ENCODE measurements at regions of chr1 and their contacts with region 1.

Region 1: GRCh38 chr1:214660862-214661261 is 57.9 kb downstream of the CENPF start:
- DNase-seq: peak; percentile 26 to 58 (median 48)
- H3K4me3 ChIP-seq: no peak overlapping the region
- H3K27ac ChIP-seq: no peak overlapping the region
- H3K4me1 ChIP-seq: no peaks in the 10 kb centered on the region
- H3K27me3 ChIP-seq: no peaks in the 10 kb centered on the region
- CTCF ChIP-seq: peak in 1 of 3 donors; percentile 7
- EP300 ChIP-seq: no peak
- POLR2A ChIP-seq: no peak

Region 2: GRCh38 chr1:214808845-214809460 is 148.1 kb after region 1 on chr1:
- intact Hi-C with region 1: no loop called
- DNase-seq: no peak
- H3K4me3 ChIP-seq: no peak overlapping the region
- H3K27ac ChIP-seq: no peak overlapping the region
- H3K4me1 ChIP-seq: no peaks in the 10 kb centered on the region
- H3K27me3 ChIP-seq: no peaks in the 10 kb centered on the region
- CTCF ChIP-seq: no peak
- EP300 ChIP-seq: no peak
- POLR2A ChIP-seq: no peak

Region 3: DNA sequence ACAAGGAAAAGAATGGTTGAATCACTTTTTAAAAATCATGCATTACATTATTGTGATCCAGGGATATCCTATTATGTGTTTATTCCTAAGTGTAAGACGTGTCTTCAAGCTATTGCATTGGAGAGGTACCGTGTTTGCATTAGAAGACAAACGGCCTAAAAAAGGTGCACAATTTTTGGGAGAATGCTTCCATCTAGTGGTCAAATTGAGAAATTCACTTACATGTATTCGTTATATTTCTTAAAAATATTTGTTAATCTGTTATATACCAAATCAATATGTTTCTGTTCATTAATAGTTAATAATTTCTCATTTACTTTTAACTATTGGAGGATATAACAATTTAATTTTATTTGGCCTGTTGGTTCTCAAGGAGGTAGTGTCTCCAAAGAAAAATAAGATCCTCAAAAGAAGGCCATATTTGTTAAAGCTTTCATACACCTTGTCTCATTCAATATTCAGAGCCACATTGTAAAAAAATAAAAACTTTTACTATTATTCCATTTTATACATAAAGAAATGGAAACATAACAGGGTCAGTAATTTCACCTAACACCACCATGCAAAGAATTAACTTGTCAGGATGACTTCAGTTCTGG is 865.8 kb after region 1 on chr1:
- intact Hi-C with region 1: loop called in 1 of 4 experiments (anchors 10 kb)
- DNase-seq: no peak
- H3K4me3 ChIP-seq: no peak overlapping the region
- H3K27ac ChIP-seq: no peak overlapping the region
- H3K4me1 ChIP-seq: no peaks in the 10 kb centered on the region
- H3K27me3 ChIP-seq: no peaks in the 10 kb centered on the region
- CTCF ChIP-seq: peak; percentile 19 to 57 (median 46)
- EP300 ChIP-seq: no peak
- POLR2A ChIP-seq: no peak